Stomach (tissue), 19 donors: ENCODE measurements at regions of chr2 and their contacts with region 1.

Region 1: DNA sequence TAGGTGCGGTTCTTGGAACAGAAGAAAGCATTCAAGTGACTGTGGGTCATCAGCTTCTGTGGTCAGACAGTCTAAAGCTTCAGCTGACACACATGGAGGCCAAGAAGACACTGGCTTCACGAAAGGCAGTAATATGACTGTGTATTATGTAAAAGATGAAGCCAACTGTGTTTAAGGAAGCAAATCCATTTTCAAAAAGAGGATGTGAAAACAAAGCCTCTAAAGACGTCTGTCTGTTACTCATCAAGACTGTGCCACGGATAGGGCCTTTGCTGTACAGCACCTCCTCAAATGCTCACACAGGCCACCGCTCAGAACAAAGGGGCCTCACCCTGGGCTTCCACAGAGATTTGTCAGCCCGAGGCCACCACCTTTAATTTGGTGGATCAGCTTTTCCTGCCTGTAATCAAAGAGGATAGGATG is 21.1 kb upstream of the TMEM163 start:
- DNase-seq: peak in 1 of 2 donors; percentile 30
- H3K4me3 ChIP-seq: no peak overlapping the region
- H3K27ac ChIP-seq: peak overlapping the region in 1 of 5 donors; percentile 5
- H3K4me1 ChIP-seq: no peaks in the 10 kb centered on the region
- H3K27me3 ChIP-seq: peaks cover 0 to 4% (median 0%) of the 10 kb centered on the region in 3 donors
- CTCF ChIP-seq: no peak
- EP300 ChIP-seq: no peak
- POLR2A ChIP-seq: no peak

Region 2: GRCh38 chr2:134118279-134119116 is 621.4 kb before region 1 on chr2:
- intact Hi-C with region 1: no loop called
- DNase-seq: peak; percentile 88 to 94
- H3K4me3 ChIP-seq: no peak overlapping the region
- H3K27ac ChIP-seq: peak overlapping the region; percentile 2 to 97 (median 94)
- H3K4me1 ChIP-seq: peaks cover 22 to 43% (median 38%) of the 10 kb centered on the region in 4 donors
- H3K27me3 ChIP-seq: no peaks in the 10 kb centered on the region
- CTCF ChIP-seq: peak in 5 of 7 experiments; percentile 52 to 85 (median 68)
- EP300 ChIP-seq: no peak
- POLR2A ChIP-seq: no peak

Region 3: GRCh38 chr2:134581877-134582546 is 157.9 kb before region 1 on chr2:
- intact Hi-C with region 1: loop called (anchors 10 kb)
- DNase-seq: no peak
- H3K4me3 ChIP-seq: no peak overlapping the region
- H3K27ac ChIP-seq: no peak overlapping the region
- H3K4me1 ChIP-seq: no peaks in the 10 kb centered on the region
- H3K27me3 ChIP-seq: no peaks in the 10 kb centered on the region
- CTCF ChIP-seq: no peak
- EP300 ChIP-seq: no peak
- POLR2A ChIP-seq: no peak

Region 4: GRCh38 chr2:134657637-134658250 is 82.1 kb before region 1 on chr2:
- intact Hi-C with region 1: no loop called
- DNase-seq: no peak
- H3K4me3 ChIP-seq: no peak overlapping the region
- H3K27ac ChIP-seq: no peak overlapping the region
- H3K4me1 ChIP-seq: no peaks in the 10 kb centered on the region
- H3K27me3 ChIP-seq: no peaks in the 10 kb centered on the region
- CTCF ChIP-seq: peak in 3 of 7 experiments; percentile 27 to 33 (median 31)
- EP300 ChIP-seq: no peak
- POLR2A ChIP-seq: no peak

Region 5: DNA sequence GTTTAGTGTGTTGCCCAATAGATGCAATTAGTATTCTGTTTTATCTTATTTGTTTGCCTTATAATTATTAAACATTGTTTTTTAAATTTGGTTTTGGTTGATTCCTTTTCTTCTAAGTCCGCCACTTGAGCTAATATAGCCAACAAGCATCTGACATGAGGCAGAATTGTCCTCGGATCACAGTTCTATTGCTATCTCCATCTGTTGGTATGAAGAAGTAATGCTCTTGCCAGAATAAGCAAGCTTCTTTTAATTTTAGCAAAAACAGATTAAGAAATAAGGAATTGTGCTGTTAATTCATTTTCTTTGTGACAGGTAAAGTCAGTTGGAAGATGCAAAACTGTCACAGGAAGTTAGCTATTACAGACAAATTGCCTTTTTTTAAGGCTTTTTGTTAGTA is 845.7 kb after region 1 on chr2:
- intact Hi-C with region 1: no loop called
- DNase-seq: peak in 1 of 2 donors; percentile 3
- H3K4me3 ChIP-seq: no peak overlapping the region
- H3K27ac ChIP-seq: no peak overlapping the region
- H3K4me1 ChIP-seq: no peaks in the 10 kb centered on the region
- H3K27me3 ChIP-seq: no peaks in the 10 kb centered on the region
- CTCF ChIP-seq: no peak
- EP300 ChIP-seq: no peak
- POLR2A ChIP-seq: no peak